ENCODE measurements at regions of chr12 and their contacts with region 1.

Region 1: GRCh38 chr12:30695199-30696103 is at the start of gene IPO8:
- DNase-seq: peak; percentile 88
- H3K4me3 ChIP-seq: peak within 1 kb of the TSS; percentile 85 to 87
- H3K27ac ChIP-seq: peak within 1 kb of the TSS; percentile 74 to 77
- H3K4me1 ChIP-seq: peaks cover 5% of the 10 kb centered on the region
- H3K27me3 ChIP-seq: no peaks in the 10 kb centered on the region
- CTCF ChIP-seq: peak in 3 of 4 experiments; percentile 7 to 39 (median 10)
- POLR2A ChIP-seq: no peak
- total RNA-seq, gene IPO8: 31.9 to 40.3 TPM

Region 2: GRCh38 chr12:29782285-29782870 is 913.1 kb before region 1 on chr12:
- intact Hi-C with region 1: loop called (anchors 10 kb)
- DNase-seq: peak; percentile 11
- H3K4me3 ChIP-seq: peak overlapping the region; percentile 60 to 62
- H3K27ac ChIP-seq: peak overlapping the region; percentile 58 to 66
- H3K4me1 ChIP-seq: no peaks in the 10 kb centered on the region
- H3K27me3 ChIP-seq: no peaks in the 10 kb centered on the region
- CTCF ChIP-seq: no peak
- POLR2A ChIP-seq: no peak

Region 3: DNA sequence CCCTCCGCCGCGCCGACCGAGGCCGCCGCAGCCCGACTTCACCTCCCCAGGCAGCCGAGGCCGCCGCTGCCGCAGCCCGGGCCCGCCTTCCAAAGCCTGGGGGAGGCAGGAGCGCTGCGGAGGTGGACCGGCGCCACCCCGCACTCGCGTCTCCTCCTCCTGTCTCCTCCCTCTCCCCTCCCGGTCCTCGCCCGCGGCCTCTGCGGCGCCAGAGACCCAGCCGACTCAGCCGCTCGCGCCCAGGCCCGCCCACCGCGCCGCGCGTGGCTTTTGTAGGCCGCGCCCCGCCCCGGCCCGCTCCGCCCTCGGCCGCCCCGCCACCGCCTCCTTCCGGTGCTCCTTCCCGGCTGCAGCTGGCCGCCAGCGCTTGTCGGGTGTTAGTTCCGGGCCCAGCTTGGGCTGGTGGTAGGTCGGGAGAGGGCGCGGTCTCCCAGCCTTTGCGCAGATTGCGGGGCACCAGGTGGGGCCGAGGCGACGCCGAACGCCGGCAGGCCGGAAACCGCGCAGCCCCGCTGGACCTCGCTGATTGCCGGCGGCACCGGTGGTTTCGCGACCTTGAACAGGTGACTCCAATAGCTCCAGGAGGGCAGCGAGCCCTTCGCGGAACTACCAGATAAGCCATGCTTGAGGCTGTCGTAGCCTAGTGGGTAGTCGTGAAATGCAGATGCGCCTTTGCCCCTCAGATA is 59.4 kb after region 1 on chr12 and contains the start of gene CAPRIN2:
- intact Hi-C with region 1: loop called (anchors 5 kb)
- DNase-seq: peak; percentile 94
- H3K4me3 ChIP-seq: peak within 1 kb of the TSS; percentile 76 to 93
- H3K27ac ChIP-seq: peak within 1 kb of the TSS; percentile 86
- H3K4me1 ChIP-seq: peaks cover 5% of the 10 kb centered on the region
- H3K27me3 ChIP-seq: no peaks in the 10 kb centered on the region
- CTCF ChIP-seq: peak; percentile 45 to 68 (median 53)
- POLR2A ChIP-seq: peak; percentile 74
- total RNA-seq, gene CAPRIN2: 20.4 to 40.0 TPM

Region 4: DNA sequence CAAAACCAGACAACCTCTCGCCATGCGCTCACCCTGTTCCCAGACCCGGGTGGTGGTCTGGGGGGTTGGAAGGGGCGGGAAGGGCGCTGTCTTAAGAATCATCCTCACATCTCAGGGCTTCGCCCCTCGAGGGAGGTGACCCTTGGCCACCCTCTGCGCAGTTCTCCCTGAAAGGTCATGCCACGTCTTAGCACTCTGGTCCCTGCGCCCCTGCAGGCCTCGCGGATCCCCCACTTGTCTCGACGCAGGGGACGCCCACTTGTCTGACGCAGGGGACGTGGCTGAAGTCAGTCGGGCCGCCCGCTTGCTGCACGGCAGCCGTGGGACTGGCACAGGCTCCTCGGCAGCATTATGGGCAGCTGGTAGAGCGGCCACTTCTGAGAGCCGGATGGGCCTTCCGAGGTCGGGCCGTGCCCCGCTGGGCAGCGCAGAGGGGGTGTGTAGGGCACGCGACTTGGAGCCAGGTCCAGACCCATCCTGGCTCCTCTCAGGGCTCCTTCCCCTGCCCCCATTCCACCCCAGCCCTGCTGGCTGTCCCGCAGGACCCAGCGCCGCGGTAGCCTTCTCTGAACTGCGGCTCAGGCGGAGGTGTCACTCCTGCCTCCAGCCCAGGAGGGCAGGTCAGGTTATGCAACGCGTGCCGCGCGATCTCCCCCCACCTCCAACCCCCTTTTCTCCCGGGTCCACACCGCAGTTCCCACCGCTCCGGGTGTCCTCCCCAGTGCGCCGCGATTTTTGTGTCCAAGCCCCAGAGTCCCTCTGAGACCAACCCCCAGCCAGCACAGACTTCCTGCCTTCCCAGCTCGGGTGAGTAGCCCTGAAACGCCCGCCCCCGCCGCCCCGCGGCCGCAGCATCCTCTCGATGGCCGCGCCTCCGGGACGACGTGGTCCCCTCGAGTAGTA is 100.2 kb after region 1 on chr12:
- intact Hi-C with region 1: loop called (anchors 10 kb)
- DNase-seq: no peak
- H3K4me3 ChIP-seq: peak overlapping the region; percentile 33 to 34
- H3K27ac ChIP-seq: peak overlapping the region; percentile 22 to 34
- H3K4me1 ChIP-seq: no peaks in the 10 kb centered on the region
- H3K27me3 ChIP-seq: no peaks in the 10 kb centered on the region
- CTCF ChIP-seq: no peak
- POLR2A ChIP-seq: no peak

Region 5: GRCh38 chr12:30862486-30862885 is 167.0 kb after region 1 on chr12:
- intact Hi-C with region 1: no loop called
- DNase-seq: peak; percentile 49
- H3K4me3 ChIP-seq: no peak overlapping the region
- H3K27ac ChIP-seq: no peak overlapping the region
- H3K4me1 ChIP-seq: no peaks in the 10 kb centered on the region
- H3K27me3 ChIP-seq: no peaks in the 10 kb centered on the region
- CTCF ChIP-seq: no peak
- POLR2A ChIP-seq: no peak